CD14-positive monocyte (primary cell): ENCODE measurements at regions of chr9 and their contacts with region 1.

Region 1: GRCh38 chr9:136644598-136645351 is 17.9 kb upstream of the EGFL7 start:
- DNase-seq: peak; percentile 91 to 97 (median 93)
- H3K4me3 ChIP-seq: peak overlapping the region in 2 of 3 experiments; percentile 40 to 62
- H3K4me3 Mint-ChIP-seq: peak overlapping the region; percentile 62 to 68
- H3K27ac ChIP-seq: peak overlapping the region; percentile 95 to 99
- H3K27ac Mint-ChIP-seq: peak overlapping the region; percentile 90 to 96 (median 94)
- H3K4me1 ChIP-seq: peaks cover 49 to 52% of the 10 kb centered on the region in 2 donors
- H3K4me1 Mint-ChIP-seq: peaks cover 41% of the 10 kb centered on the region
- H3K27me3 ChIP-seq: peaks cover 0 to 20% of the 10 kb centered on the region in 2 donors
- H3K27me3 Mint-ChIP-seq: peaks cover 22 to 56% (median 44%) of the 10 kb centered on the region in 3 donors
- CTCF ChIP-seq: peak; percentile 98

Region 2: GRCh38 chr9:136502942-136503550 is 141.7 kb before region 1 on chr9:
- intact Hi-C with region 1: no loop called
- DNase-seq: no peak
- H3K4me3 ChIP-seq: no peak overlapping the region
- H3K4me3 Mint-ChIP-seq: no peak overlapping the region
- H3K27ac ChIP-seq: no peak overlapping the region
- H3K27ac Mint-ChIP-seq: peak overlapping the region in 1 of 7 donors; percentile 35
- H3K4me1 ChIP-seq: no peaks in the 10 kb centered on the region
- H3K4me1 Mint-ChIP-seq: no peaks in the 10 kb centered on the region
- H3K27me3 ChIP-seq: no peaks in the 10 kb centered on the region
- H3K27me3 Mint-ChIP-seq: peaks cover 0 to 4% (median 0%) of the 10 kb centered on the region in 3 donors
- CTCF ChIP-seq: no peak

Region 3: GRCh38 chr9:136545966-136546698 is 98.6 kb before region 1 on chr9 and contains the start of gene NOTCH1:
- intact Hi-C with region 1: loop called in 1 of 2 experiments (anchors 5 kb)
- DNase-seq: peak; percentile 95 to 98 (median 97)
- H3K4me3 ChIP-seq: peak within 1 kb of the TSS; percentile 87 to 99 (median 93)
- H3K4me3 Mint-ChIP-seq: peak within 1 kb of the TSS; percentile 89 to 94
- H3K27ac ChIP-seq: peak within 1 kb of the TSS; percentile 84 to 92
- H3K27ac Mint-ChIP-seq: peak within 1 kb of the TSS; percentile 82 to 92 (median 90)
- H3K4me1 ChIP-seq: peaks cover 64 to 79% of the 10 kb centered on the region in 2 donors
- H3K4me1 Mint-ChIP-seq: peaks cover 51% of the 10 kb centered on the region
- H3K27me3 ChIP-seq: no peaks in the 10 kb centered on the region
- H3K27me3 Mint-ChIP-seq: peaks cover 2 to 11% (median 2%) of the 10 kb centered on the region in 3 donors
- CTCF ChIP-seq: no peak
- polyA plus RNA-seq, gene NOTCH1: 1.4 to 33.0 (median 2.2) TPM

Region 4: GRCh38 chr9:136695428-136695895 is 50.7 kb after region 1 on chr9:
- intact Hi-C with region 1: loop called in 1 of 2 experiments (anchors 5 kb)
- DNase-seq: no peak
- H3K4me3 ChIP-seq: no peak overlapping the region
- H3K4me3 Mint-ChIP-seq: no peak overlapping the region
- H3K27ac ChIP-seq: no peak overlapping the region
- H3K27ac Mint-ChIP-seq: no peak overlapping the region
- H3K4me1 ChIP-seq: peaks cover 60 to 64% of the 10 kb centered on the region in 2 donors
- H3K4me1 Mint-ChIP-seq: peaks cover 42% of the 10 kb centered on the region
- H3K27me3 ChIP-seq: no peaks in the 10 kb centered on the region
- H3K27me3 Mint-ChIP-seq: peaks cover 2 to 9% (median 7%) of the 10 kb centered on the region in 3 donors
- CTCF ChIP-seq: no peak